Common myeloid progenitor, CD34-positive (primary cell): ENCODE measurements at regions of chr3 and their contacts with region 1.

Region 1: GRCh38 chr3:139111392-139112229 is 66.9 kb upstream of the PRR23C start:
- DNase-seq: peak; percentile 58 to 78 (median 73)
- H3K4me3 ChIP-seq: no peak overlapping the region
- H3K27ac ChIP-seq: no peak overlapping the region
- H3K4me1 ChIP-seq: no peaks in the 10 kb centered on the region
- H3K27me3 ChIP-seq: peaks cover 0 to 9% (median 0%) of the 10 kb centered on the region in 5 experiments

Region 2: GRCh38 chr3:138174421-138175122 is 937.0 kb before region 1 on chr3 and contains the start of gene DBR1:
- CTCF ChIA-PET with region 1: no interaction called
- POLR2A ChIA-PET with region 1: no interaction called
- DNase-seq: peak; percentile 84 to 90 (median 88)
- H3K4me3 ChIP-seq: peak within 1 kb of the TSS; percentile 64 to 95 (median 84)
- H3K27ac ChIP-seq: peak within 1 kb of the TSS; percentile 46 to 81
- H3K4me1 ChIP-seq: peaks cover 7 to 16% (median 13%) of the 10 kb centered on the region in 4 experiments
- H3K27me3 ChIP-seq: no peaks in the 10 kb centered on the region

Region 3: DNA sequence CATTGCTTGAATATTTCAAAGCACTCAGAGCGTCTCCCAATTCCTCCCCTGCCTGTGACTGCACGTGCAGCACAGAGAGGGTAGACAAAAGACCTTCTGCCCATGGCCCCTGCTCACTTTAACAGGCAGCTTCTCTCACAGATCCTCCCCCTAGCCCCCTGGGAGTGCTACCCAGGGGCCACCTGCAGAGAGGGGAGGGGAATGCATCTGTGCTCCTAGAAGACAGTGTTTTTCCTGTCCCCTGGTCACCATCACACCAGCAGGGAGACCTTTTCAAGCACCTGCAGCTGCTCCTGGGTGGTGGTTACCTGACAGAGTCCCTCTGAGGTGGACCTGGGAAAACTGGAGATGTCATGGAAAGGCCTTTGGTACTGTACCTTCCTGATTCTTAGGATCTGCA is 10.2 kb before region 1 on chr3:
- CTCF ChIA-PET with region 1: interaction called, 15 read pairs
- POLR2A ChIA-PET with region 1: no interaction called
- DNase-seq: no peak
- H3K4me3 ChIP-seq: no peak overlapping the region
- H3K27ac ChIP-seq: no peak overlapping the region
- H3K4me1 ChIP-seq: no peaks in the 10 kb centered on the region
- H3K27me3 ChIP-seq: peaks cover 0 to 13% (median 0%) of the 10 kb centered on the region in 5 experiments

Region 4: GRCh38 chr3:139329345-139329850 is 217.8 kb after region 1 on chr3:
- CTCF ChIA-PET with region 1: interaction called, 34 read pairs
- POLR2A ChIA-PET with region 1: no interaction called
- DNase-seq: peak; percentile 78 to 90 (median 88)
- H3K4me3 ChIP-seq: peak overlapping the region in 4 of 7 experiments; percentile 8 to 71 (median 58)
- H3K27ac ChIP-seq: no peak overlapping the region
- H3K4me1 ChIP-seq: peaks cover 0 to 10% (median 6%) of the 10 kb centered on the region in 4 experiments
- H3K27me3 ChIP-seq: peaks cover 0 to 21% (median 8%) of the 10 kb centered on the region in 5 experiments